Activated CD8-positive, alpha-beta T cell treated with anti-CD3 and anti-CD28 coated beads for 36 hours (primary cell): ENCODE measurements at regions of chr11 and their contacts with region 1.

Region 1: DNA sequence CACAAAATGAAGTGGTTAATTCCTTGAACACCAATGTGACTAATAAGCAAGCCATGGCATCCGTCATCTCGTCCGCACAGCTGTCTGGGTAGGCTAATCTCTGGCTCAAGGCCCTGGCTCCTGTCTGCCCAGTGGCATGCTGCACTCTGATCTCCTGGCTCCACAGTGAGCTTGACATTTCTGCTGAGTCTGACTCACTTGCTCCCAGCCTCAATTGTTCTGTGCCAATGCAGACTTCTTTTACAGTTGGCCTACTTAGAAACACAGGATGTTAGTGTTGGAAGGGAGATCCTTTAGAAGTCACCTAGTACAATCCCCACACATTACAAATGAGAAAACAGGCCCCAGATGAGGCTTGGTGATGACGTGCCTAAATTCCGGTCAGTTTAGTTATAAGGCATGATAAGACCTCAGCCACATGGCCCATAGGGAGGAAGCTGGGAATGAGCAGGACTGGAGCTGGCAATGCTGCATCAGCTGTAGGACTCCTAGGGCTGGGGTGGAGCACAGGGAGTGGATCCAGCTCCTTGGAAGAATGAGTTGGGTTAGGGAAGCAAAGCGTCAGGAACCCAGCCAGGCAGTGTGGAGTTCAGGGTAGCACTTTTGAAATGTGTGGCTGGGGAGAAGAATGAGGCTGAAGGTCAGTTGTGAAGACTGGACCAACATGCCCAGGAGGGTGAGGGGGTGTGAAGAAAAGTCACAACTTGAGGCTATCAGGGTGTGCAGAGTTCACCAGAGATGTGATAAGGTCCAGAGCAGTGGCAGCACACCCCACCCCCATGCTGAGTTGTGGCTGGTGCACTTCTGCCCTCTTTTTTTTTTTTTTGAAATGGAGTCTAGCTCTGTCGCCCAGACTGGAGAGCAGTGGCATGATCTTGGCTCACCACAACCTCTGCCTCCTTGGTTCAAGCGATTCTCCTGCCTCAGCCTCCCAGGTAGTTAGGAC is 70.2 kb upstream of the EED start:
- DNase-seq: no peak
- ATAC-seq: peak; percentile 19
- H3K4me3 Mint-ChIP-seq: no peak overlapping the region
- H3K27ac Mint-ChIP-seq: no peak overlapping the region
- H3K4me1 Mint-ChIP-seq: peaks cover 27% of the 10 kb centered on the region
- H3K27me3 Mint-ChIP-seq: no peaks in the 10 kb centered on the region
- CTCF ChIP-seq: no peak

Region 2: GRCh38 chr11:86124834-86125233 is 49.5 kb before region 1 on chr11:
- CTCF ChIA-PET with region 1: no interaction called
- POLR2A ChIA-PET with region 1: no interaction called
- intact Hi-C with region 1: no loop called
- DNase-seq: no peak
- ATAC-seq: peak; percentile 73
- H3K4me3 Mint-ChIP-seq: no peak overlapping the region
- H3K27ac Mint-ChIP-seq: no peak overlapping the region
- H3K4me1 Mint-ChIP-seq: peaks cover 17% of the 10 kb centered on the region
- H3K27me3 Mint-ChIP-seq: peaks cover 3% of the 10 kb centered on the region
- CTCF ChIP-seq: no peak

Region 3: GRCh38 chr11:86138958-86139357 is 35.4 kb before region 1 on chr11:
- CTCF ChIA-PET with region 1: no interaction called
- POLR2A ChIA-PET with region 1: interaction called, 3 read pairs
- intact Hi-C with region 1: loop called (anchors 5 kb)
- DNase-seq: peak; percentile 53
- ATAC-seq: peak; percentile 84
- H3K4me3 Mint-ChIP-seq: peak overlapping the region; percentile 9
- H3K27ac Mint-ChIP-seq: peak overlapping the region; percentile 77
- H3K4me1 Mint-ChIP-seq: peaks cover 32% of the 10 kb centered on the region
- H3K27me3 Mint-ChIP-seq: no peaks in the 10 kb centered on the region
- CTCF ChIP-seq: no peak